Activated CD4-positive, alpha-beta memory T cell treated with anti-CD3 and anti-CD28 coated beads for 36 hours (primary cell): ENCODE measurements at regions of chr13 and their contacts with region 1.

Region 1: DNA sequence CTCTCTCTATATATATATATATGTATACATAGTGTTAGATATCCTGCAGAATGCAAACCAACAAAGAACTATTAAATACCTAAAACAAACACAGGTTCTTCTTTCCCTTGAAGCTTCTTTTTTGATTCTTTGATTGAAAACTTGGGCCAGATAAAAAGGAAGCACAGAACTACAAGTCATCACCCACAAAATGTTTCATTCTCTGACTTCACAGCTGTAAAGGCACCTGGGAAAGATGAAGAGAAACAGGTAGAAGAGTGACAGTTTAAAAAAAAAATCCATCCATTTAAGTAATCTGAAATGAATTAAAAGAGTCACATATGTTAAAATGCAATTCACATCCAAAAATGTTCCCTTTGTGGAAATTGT is 90.7 kb upstream of the FNDC3A start:
- DNase-seq: no peak
- H3K4me3 Mint-ChIP-seq: no peak overlapping the region
- H3K27ac Mint-ChIP-seq: peak overlapping the region; percentile 78
- H3K4me1 Mint-ChIP-seq: peaks cover 52% of the 10 kb centered on the region
- H3K27me3 Mint-ChIP-seq: peaks cover 3% of the 10 kb centered on the region

Region 2: DNA sequence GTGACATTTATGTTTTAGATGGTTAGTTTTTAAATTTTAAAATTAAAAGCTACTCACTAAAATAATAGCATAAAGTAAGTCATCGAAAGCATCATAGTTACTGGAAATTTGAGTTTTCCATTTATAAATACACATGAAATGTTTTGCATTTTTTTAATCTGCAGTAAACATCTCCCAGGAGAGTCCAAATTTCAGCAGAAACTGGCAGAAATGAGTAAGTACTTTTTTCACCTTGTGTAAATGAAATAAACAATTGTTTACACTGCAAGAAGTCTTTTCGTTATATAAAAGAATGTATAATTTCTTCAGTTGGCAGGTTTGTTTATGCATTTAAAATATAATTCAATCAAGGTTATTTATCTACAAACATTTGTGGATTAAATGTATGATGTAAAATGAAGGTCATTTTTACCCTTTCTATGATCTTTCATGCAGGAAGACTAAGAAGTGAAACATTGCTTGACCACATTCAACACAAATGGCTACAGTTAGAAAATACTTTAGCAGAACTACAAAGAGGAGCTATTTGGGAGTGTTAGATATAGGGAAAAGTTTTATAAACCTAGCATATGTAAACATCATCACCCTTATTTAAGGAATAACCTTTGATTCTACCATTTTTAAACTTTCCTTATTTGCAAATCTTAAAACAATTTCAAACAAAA is 407.7 kb before region 1 on chr13:
- CTCF ChIA-PET with region 1: no interaction called
- POLR2A ChIA-PET with region 1: no interaction called
- intact Hi-C with region 1: no loop called
- DNase-seq: no peak
- H3K4me3 Mint-ChIP-seq: no peak overlapping the region
- H3K27ac Mint-ChIP-seq: no peak overlapping the region
- H3K4me1 Mint-ChIP-seq: no peaks in the 10 kb centered on the region
- H3K27me3 Mint-ChIP-seq: no peaks in the 10 kb centered on the region

Region 3: DNA sequence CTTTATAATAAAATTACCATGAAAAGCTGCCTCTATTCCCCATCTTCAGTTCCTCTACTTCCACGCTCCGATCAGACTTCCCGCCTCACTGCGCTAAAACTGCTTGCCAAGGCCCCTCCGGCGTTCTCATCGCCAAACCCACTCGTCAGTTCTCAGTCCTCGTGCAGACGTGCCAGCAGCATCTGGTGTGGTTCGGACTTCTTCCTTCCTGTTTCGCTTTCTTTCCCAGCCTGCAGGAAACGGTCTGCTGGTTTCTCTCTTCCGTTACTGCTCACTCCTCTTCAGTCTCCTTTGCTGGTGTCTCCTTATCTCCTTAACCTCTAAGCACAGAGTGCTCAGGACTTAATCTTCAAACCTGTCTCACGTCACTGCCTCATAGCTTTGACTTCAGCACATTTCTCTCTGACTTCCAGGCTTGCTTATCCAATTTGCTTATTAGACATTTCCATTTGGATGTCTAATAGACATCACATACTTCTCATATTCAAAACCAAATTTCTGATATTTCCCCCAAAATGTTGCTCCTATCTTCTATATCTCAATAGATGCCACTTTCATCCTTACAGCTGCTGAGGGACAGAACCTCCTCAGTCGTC is 392.4 kb before region 1 on chr13:
- CTCF ChIA-PET with region 1: no interaction called
- POLR2A ChIA-PET with region 1: no interaction called
- intact Hi-C with region 1: no loop called
- DNase-seq: peak; percentile 80
- H3K4me3 Mint-ChIP-seq: no peak overlapping the region
- H3K27ac Mint-ChIP-seq: no peak overlapping the region
- H3K4me1 Mint-ChIP-seq: peaks cover 41% of the 10 kb centered on the region
- H3K27me3 Mint-ChIP-seq: no peaks in the 10 kb centered on the region

Region 4: GRCh38 chr13:48828962-48829421 is 56.0 kb before region 1 on chr13:
- CTCF ChIA-PET with region 1: no interaction called
- POLR2A ChIA-PET with region 1: no interaction called
- intact Hi-C with region 1: loop called (anchors 2 kb)
- DNase-seq: no peak
- H3K4me3 Mint-ChIP-seq: no peak overlapping the region
- H3K27ac Mint-ChIP-seq: no peak overlapping the region
- H3K4me1 Mint-ChIP-seq: peaks cover 38% of the 10 kb centered on the region
- H3K27me3 Mint-ChIP-seq: no peaks in the 10 kb centered on the region

Region 5: DNA sequence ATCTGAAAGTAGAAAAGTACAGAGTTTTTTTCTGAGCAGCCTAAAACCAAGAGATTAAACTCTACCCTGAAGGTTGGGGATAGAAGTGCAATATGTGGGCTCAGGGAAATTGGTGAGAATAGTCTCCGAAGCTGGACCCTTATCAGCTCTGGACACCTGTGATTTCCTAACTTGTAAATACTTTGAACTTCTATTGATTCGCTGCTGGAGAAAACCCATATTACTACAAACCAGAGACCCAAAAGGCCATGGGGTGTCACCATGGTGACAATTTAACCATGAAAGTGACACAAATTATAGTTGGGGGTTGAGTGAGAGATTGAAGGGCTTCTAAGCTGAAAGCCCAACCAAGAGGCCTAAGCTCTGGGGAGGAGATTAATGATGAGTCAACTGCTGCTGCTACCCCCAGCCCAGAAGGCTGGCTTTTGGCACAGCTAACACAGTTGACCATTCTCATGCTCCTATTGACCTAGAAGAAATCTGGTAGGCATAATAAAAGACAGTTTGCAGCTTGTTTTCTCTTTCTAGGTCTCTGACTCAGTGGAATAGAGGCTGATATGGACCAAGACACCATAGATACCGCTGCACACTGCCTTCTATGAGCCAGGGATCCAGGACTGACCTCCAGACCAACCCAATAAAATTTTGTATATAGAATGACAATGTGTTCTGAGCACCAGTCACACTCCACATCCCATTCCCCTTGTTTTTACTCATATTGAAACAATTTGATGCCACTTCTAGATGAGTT is 41.2 kb before region 1 on chr13:
- CTCF ChIA-PET with region 1: no interaction called
- POLR2A ChIA-PET with region 1: no interaction called
- intact Hi-C with region 1: no loop called
- DNase-seq: no peak
- H3K4me3 Mint-ChIP-seq: no peak overlapping the region
- H3K27ac Mint-ChIP-seq: no peak overlapping the region
- H3K4me1 Mint-ChIP-seq: no peaks in the 10 kb centered on the region
- H3K27me3 Mint-ChIP-seq: peaks cover 3% of the 10 kb centered on the region